A673 (cell line): ENCODE measurements at regions of chr9 and their contacts with region 1.

Region 1: DNA sequence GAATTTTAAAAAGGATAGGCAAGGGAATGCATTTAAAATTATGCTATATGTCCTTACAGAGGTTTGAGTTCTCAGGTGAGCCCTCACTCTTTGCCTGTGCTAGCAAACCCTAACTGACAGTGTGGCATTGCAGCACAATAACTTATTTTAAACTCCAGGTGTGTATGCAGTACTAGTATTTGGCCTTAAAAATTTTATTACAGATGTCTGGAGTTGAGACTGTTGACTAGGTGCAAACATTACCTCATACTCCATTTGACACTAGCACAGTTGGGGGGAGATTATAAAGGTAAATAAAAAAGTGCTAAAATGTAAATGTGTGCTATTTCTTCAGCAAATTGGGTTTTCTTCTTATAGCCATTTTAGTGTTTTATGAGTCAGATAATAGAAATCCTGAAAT is 407.7 kb downstream of the SH3GL2 start:
- DNase-seq: no peak
- H3K4me3 ChIP-seq: no peak overlapping the region
- H3K27ac ChIP-seq: no peak overlapping the region
- H3K4me1 ChIP-seq: no peaks in the 10 kb centered on the region
- H3K27me3 ChIP-seq: no peaks in the 10 kb centered on the region
- CTCF ChIP-seq: no peak

Region 2: DNA sequence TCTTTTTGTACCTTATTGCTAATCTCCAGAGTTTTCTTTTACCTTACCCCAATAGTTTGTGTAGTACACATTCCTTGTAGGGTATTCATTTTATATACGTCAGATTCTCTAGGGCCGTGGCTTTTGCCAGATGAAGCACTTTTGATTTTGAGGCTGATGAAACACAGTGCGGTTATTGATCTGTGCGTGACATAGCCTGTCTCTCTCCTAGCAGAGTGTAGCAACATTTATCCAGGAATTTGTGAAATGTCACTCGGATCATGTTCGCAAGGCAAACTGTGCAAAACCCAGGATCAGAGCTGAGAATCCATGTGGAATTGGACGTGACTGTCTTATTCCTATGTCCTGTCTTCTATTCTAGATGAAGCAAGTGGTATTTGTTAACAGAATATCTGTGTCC is 549.7 kb before region 1 on chr9:
- CTCF ChIA-PET with region 1: no interaction called
- POLR2A ChIA-PET with region 1: no interaction called
- intact Hi-C with region 1: no loop called
- DNase-seq: no peak
- H3K4me3 ChIP-seq: no peak overlapping the region
- H3K27ac ChIP-seq: no peak overlapping the region
- H3K4me1 ChIP-seq: no peaks in the 10 kb centered on the region
- H3K27me3 ChIP-seq: no peaks in the 10 kb centered on the region
- CTCF ChIP-seq: no peak

Region 3: DNA sequence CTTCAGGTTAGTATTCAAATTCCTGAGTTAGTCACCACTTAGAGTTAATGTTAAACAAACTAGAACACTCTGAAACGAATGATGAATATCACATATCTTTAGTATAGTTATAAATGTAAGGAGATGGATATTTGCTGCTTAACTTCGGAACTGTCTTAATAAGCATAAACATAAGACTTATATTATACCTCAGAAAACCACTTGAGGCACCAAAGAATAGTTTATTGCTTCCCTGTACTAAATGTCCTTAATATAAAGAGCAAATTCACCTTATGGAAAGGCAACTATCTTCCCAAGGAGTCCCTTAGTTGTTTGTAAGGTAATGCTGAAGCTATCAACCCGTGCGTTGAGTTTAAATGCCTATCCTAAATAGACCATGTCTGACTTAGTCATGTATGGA is 187.3 kb after region 1 on chr9:
- CTCF ChIA-PET with region 1: no interaction called
- POLR2A ChIA-PET with region 1: no interaction called
- intact Hi-C with region 1: no loop called
- DNase-seq: no peak
- H3K4me3 ChIP-seq: no peak overlapping the region
- H3K27ac ChIP-seq: no peak overlapping the region
- H3K4me1 ChIP-seq: no peaks in the 10 kb centered on the region
- H3K27me3 ChIP-seq: no peaks in the 10 kb centered on the region
- CTCF ChIP-seq: no peak

Region 4: GRCh38 chr9:18980189-18980588 is 993.6 kb after region 1 on chr9:
- CTCF ChIA-PET with region 1: no interaction called
- POLR2A ChIA-PET with region 1: no interaction called
- intact Hi-C with region 1: loop called (anchors 5 kb)
- DNase-seq: no peak
- H3K4me3 ChIP-seq: no peak overlapping the region
- H3K27ac ChIP-seq: no peak overlapping the region
- H3K4me1 ChIP-seq: no peaks in the 10 kb centered on the region
- H3K27me3 ChIP-seq: no peaks in the 10 kb centered on the region
- CTCF ChIP-seq: no peak